Heart left ventricle (tissue), 16 donors: ENCODE measurements at regions of chr20 and their contacts with region 1.

Region 1: DNA sequence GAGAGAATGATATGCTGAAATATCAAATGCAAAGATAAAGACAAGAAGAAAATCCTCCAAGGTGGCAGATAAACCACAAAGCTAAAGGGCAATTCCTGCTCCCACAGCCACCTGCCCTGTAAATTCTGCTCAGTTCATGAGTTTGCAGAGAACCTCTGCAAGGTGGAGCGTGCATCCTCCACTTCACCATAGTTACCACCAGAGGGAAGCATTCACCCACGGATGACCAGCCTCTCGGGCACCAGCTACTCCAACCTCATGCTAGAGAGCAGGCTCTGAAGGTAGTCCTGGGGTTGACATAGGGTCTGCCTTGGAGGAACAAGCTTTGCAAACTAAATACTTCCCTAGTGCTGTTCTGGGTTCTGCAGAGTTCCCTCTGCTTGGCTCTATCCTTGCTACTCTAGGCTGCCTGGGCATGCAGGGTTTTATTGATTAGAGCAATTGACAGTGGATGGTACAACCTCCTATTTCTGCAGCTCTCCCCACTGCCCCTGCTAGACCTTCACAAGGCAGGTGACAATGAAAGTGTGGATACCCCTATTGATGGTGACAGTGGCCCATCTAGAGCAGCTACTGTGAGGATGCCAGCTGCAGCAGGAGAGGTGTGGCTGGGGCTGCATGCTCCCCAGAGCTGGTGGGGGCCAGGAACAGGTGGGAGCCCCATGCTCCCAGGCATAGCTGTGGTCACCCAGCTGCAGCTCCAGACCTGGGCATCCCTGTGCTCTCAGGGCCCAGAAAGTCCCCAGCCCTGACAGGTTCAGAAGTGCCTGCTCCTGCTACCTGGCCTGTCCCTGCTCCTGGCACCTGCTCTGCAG is 51.1 kb downstream of the GGTLC1 start:
- DNase-seq: peak in 4 of 5 donors; percentile 30 to 52 (median 41)
- ATAC-seq: peak; percentile 81 to 94 (median 92)
- H3K4me3 ChIP-seq: no peak overlapping the region
- H3K27ac ChIP-seq: no peak overlapping the region
- H3K4me1 ChIP-seq: peaks cover 0 to 6% (median 0%) of the 10 kb centered on the region in 12 donors
- H3K27me3 ChIP-seq: peaks cover 0 to 7% (median 0%) of the 10 kb centered on the region in 9 donors
- CTCF ChIP-seq: peak; percentile 60 to 83 (median 77)
- POLR2A ChIP-seq: no peak

Region 2: GRCh38 chr20:23988561-23988960 is 51.1 kb after region 1 on chr20 and contains the start of gene GGTLC1:
- intact Hi-C with region 1: loop called in 1 of 10 experiments (anchors 2 kb)
- DNase-seq: no peak
- ATAC-seq: no peak
- H3K4me3 ChIP-seq: no peak within 1 kb of the TSS
- H3K27ac ChIP-seq: no peak within 1 kb of the TSS
- H3K4me1 ChIP-seq: no peaks in the 10 kb centered on the region
- H3K27me3 ChIP-seq: no peaks in the 10 kb centered on the region
- CTCF ChIP-seq: no peak
- POLR2A ChIP-seq: no peak
- total RNA-seq, gene GGTLC1: not detected

Region 3: GRCh38 chr20:24027229-24027628 is 89.7 kb after region 1 on chr20:
- intact Hi-C with region 1: no loop called
- DNase-seq: peak; percentile 44 to 76 (median 70)
- ATAC-seq: peak; percentile 54 to 96 (median 83)
- H3K4me3 ChIP-seq: no peak overlapping the region
- H3K27ac ChIP-seq: peak overlapping the region in 11 of 12 donors; percentile 5 to 83 (median 44)
- H3K4me1 ChIP-seq: peaks cover 0 to 23% (median 0%) of the 10 kb centered on the region in 12 donors
- H3K27me3 ChIP-seq: no peaks in the 10 kb centered on the region
- CTCF ChIP-seq: no peak
- POLR2A ChIP-seq: no peak

Region 4: DNA sequence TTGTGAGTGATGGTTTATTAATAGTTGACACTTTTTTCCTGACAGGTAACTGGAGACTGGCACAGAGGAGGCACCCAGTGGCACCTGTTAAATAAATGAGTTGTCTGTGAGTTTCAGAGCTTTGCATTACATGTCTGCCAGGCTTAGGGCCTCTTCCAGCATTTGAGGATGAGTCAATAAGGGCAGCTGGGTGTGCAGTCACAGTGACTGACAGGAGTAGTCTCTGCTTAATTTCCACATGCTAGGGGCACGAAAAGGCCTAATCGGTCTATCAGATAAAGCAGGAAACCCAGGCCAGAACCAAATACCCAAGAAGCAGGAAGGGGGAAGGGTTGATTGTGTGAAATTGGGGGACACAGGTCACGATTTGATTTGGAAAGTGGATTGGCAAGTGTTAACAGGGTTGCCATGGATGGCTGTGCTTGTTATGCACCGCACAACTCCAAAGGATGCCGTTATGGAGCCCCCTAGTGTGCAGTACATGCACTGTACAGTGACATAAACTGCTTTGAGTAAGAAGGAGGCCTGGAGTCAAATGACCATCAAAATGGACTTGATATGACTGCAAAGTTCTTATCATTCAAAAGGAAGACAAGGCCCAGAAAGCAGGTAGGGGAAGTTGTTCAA is 163.0 kb after region 1 on chr20:
- intact Hi-C with region 1: loop called in 4 of 10 experiments (anchors 2 to 5 kb)
- DNase-seq: peak in 4 of 5 donors; percentile 30 to 54 (median 38)
- ATAC-seq: peak; percentile 74 to 92 (median 90)
- H3K4me3 ChIP-seq: no peak overlapping the region
- H3K27ac ChIP-seq: no peak overlapping the region
- H3K4me1 ChIP-seq: no peaks in the 10 kb centered on the region
- H3K27me3 ChIP-seq: peaks cover 0 to 47% (median 3%) of the 10 kb centered on the region in 9 donors
- CTCF ChIP-seq: peak; percentile 61 to 80 (median 72)
- POLR2A ChIP-seq: no peak